PC-9 (cell line): ENCODE measurements at regions of chr11 and their contacts with region 1.

Region 1: DNA sequence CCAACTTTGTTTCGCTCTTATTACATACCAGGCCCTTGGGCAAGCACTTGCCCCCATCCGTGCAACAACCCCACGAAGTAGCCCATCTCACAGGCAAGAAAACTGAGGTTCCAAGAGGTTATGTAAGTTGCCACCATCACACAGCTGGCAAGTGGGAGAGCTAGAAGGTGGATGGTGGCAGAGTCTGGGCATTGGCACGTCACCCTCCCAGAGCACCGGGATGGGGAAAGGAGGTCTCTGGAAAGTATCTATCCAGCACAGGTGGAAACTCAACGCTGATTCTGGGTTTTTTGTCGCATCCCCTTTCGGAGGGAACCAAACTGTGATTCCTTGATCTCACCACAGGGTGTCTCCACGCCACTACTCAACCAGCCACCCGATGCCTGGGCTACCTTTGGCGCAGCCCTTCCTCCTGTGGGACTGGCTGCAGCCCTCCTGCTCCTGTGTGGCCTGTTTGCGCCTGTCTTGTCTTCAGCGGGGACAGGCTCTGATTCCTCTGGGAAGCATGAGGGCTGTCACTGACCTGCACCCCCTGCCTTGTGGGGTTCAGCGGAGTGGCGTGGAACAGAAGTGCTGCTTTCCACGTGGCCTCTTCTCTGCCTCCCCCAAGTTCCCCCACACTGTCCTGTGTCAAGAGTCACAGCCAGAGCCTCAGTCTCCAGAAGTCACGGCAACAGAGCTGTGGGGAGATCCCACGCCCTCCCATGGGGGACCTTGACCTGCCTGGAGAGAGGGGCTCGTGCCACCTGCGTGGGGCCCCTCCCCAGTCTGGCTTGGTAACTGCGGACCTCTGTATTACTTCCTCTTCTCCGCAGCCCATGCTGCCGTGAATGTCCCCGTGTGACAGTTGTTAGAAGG is 34.4 kb upstream of the TRIM29 start:
- DNase-seq: peak; percentile 63 to 68
- H3K4me3 ChIP-seq: no peak overlapping the region
- H3K27ac ChIP-seq: no peak overlapping the region
- H3K4me1 ChIP-seq: no peaks in the 10 kb centered on the region
- H3K27me3 ChIP-seq: peaks cover 21% of the 10 kb centered on the region
- CTCF ChIP-seq: peak; percentile 94

Region 2: GRCh38 chr11:119666463-119667131 is 505.7 kb before region 1 on chr11:
- CTCF ChIA-PET with region 1: no interaction called
- POLR2A ChIA-PET with region 1: no interaction called
- intact Hi-C with region 1: loop called (anchors 1 kb)
- DNase-seq: peak; percentile 71 to 83
- H3K4me3 ChIP-seq: no peak overlapping the region
- H3K27ac ChIP-seq: no peak overlapping the region
- H3K4me1 ChIP-seq: no peaks in the 10 kb centered on the region
- H3K27me3 ChIP-seq: no peaks in the 10 kb centered on the region
- CTCF ChIP-seq: peak; percentile 98

Region 3: DNA sequence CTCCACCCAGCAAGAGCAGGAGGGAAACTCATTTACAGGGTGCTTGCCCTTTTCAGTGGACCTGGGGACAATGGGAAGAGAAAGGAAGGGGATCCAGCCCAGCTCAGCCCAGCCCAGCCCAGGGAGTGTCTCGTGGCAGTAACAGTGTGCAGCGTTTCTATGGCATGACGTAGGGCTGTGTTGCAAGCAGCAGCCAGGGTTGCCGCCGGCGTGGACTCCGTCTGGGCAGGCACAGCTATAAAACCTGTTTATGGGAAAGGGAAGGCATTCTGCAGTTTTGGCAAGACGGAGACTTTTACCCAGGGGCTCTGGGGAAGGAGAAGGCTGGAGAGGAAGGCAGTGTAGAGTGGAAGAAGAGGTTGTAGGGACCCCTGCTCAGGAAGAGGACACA is 43.5 kb before region 1 on chr11:
- CTCF ChIA-PET with region 1: no interaction called
- POLR2A ChIA-PET with region 1: interaction called, 5 read pairs
- intact Hi-C with region 1: loop called (anchors 2 kb)
- DNase-seq: peak in 1 of 2 experiments; percentile 61
- H3K4me3 ChIP-seq: no peak overlapping the region
- H3K27ac ChIP-seq: no peak overlapping the region
- H3K4me1 ChIP-seq: peaks cover 24% of the 10 kb centered on the region
- H3K27me3 ChIP-seq: no peaks in the 10 kb centered on the region
- CTCF ChIP-seq: no peak

Region 4: DNA sequence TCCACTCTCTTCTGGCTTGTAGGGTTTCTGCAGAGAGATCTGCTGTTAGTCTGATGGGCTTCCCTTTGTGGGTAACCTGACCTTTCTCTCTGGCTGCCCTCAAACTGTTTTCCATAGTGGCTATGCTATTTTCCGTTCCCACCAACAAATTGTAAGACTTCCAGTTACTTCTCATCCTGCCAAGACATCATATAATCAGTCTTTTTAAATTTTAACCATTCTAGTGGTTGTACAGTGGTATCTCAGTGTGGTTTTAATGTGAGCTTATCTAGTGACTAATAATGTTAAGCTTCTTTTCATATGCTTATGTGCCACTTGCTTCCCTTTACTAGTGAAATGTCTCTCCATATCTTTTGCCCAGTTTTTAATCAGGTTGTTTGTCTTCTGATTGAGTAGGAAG is 20.7 kb before region 1 on chr11:
- CTCF ChIA-PET with region 1: no interaction called
- POLR2A ChIA-PET with region 1: no interaction called
- intact Hi-C with region 1: no loop called
- DNase-seq: no peak
- H3K4me3 ChIP-seq: no peak overlapping the region
- H3K27ac ChIP-seq: no peak overlapping the region
- H3K4me1 ChIP-seq: peaks cover 22% of the 10 kb centered on the region
- H3K27me3 ChIP-seq: no peaks in the 10 kb centered on the region
- CTCF ChIP-seq: no peak

Region 5: GRCh38 chr11:120229451-120230424 is 57.5 kb after region 1 on chr11:
- CTCF ChIA-PET with region 1: no interaction called
- POLR2A ChIA-PET with region 1: no interaction called
- intact Hi-C with region 1: loop called (anchors 1 kb)
- DNase-seq: no peak
- H3K4me3 ChIP-seq: no peak overlapping the region
- H3K27ac ChIP-seq: no peak overlapping the region
- H3K4me1 ChIP-seq: no peaks in the 10 kb centered on the region
- H3K27me3 ChIP-seq: no peaks in the 10 kb centered on the region
- CTCF ChIP-seq: peak; percentile 89

Region 6: GRCh38 chr11:120303004-120303637 is 130.8 kb after region 1 on chr11:
- CTCF ChIA-PET with region 1: interaction called, 3 read pairs
- POLR2A ChIA-PET with region 1: no interaction called
- intact Hi-C with region 1: loop called (anchors 1 kb)
- DNase-seq: peak in 1 of 2 experiments; percentile 67
- H3K4me3 ChIP-seq: no peak overlapping the region
- H3K27ac ChIP-seq: peak overlapping the region; percentile 77
- H3K4me1 ChIP-seq: peaks cover 78% of the 10 kb centered on the region
- H3K27me3 ChIP-seq: no peaks in the 10 kb centered on the region
- CTCF ChIP-seq: peak; percentile 87